ENCODE measurements at regions of chr4 and their contacts with region 1.

Region 1: GRCh38 chr4:151325111-151325948 is at the start of gene SH3D19:
- DNase-seq: peak; percentile 56 to 82
- H3K4me3 ChIP-seq: peak within 1 kb of the TSS; percentile 67
- H3K27ac ChIP-seq: peak within 1 kb of the TSS; percentile 93
- H3K4me1 ChIP-seq: peaks cover 39% of the 10 kb centered on the region
- H3K27me3 ChIP-seq: no peaks in the 10 kb centered on the region
- CTCF ChIP-seq: no peak
- total RNA-seq, gene SH3D19: 40.0 and 41.7 TPM in 2 replicates

Region 2: GRCh38 chr4:150906987-150907633 is 418.2 kb before region 1 on chr4:
- CTCF ChIA-PET with region 1: interaction called, 14 read pairs
- POLR2A ChIA-PET with region 1: no interaction called
- intact Hi-C with region 1: no loop called
- DNase-seq: no peak
- H3K4me3 ChIP-seq: no peak overlapping the region
- H3K27ac ChIP-seq: no peak overlapping the region
- H3K4me1 ChIP-seq: no peaks in the 10 kb centered on the region
- H3K27me3 ChIP-seq: no peaks in the 10 kb centered on the region
- CTCF ChIP-seq: no peak

Region 3: GRCh38 chr4:151442002-151442401 is 116.7 kb after region 1 on chr4:
- CTCF ChIA-PET with region 1: no interaction called
- POLR2A ChIA-PET with region 1: no interaction called
- intact Hi-C with region 1: no loop called
- DNase-seq: no peak
- H3K4me3 ChIP-seq: no peak overlapping the region
- H3K27ac ChIP-seq: no peak overlapping the region
- H3K4me1 ChIP-seq: no peaks in the 10 kb centered on the region
- H3K27me3 ChIP-seq: no peaks in the 10 kb centered on the region
- CTCF ChIP-seq: no peak